Heart left ventricle (tissue), 16 donors: ENCODE measurements at regions of chr3 and their contacts with region 1.

Region 1: DNA sequence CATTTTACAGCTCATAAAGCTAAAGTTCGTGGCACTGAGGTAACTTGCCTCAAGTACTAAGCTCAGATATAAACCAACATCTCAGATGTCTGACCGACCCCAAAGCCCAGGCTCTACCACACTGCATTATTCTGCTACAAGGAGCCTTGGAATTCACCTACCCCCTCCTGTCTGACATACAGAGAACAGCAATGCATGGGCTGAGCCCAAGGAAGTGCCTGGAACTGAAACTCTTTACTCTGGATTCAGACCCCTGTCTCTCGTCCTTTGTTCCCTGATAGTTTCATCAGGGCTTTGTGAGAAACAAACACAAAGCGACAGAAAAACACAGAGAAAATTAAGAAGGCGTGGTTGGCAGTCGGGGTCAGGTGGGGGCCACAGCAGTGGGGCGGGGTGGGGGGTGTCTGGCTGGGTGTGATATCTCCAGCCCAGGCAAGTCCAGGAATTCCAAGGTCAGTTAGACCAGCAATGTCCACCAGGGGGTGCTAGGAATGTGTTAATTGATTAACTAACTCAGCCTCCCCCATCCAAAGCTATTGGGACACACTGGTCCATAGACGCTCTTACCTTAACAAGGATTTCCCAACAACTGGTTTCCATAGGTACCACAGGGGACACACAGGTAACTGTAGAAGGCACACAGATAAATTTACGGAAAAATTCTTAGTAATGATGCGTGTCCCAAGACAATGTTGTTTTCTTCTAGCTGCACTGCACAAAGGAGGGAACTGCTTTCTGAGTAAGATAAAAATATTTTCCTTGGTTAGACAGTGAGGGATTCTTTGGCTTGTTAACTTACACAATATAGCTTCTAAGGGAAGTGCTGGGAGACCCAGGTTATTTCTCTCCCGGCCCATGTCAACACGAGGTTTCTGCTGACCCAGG is 18.8 kb upstream of the SSUH2 start:
- DNase-seq: peak in 4 of 5 donors; percentile 50 to 64 (median 60)
- ATAC-seq: peak in 2 of 4 donors; percentile 18 to 36
- H3K4me3 ChIP-seq: no peak overlapping the region
- H3K27ac ChIP-seq: no peak overlapping the region
- H3K4me1 ChIP-seq: peaks cover 0 to 37% (median 19%) of the 10 kb centered on the region in 12 donors
- H3K27me3 ChIP-seq: no peaks in the 10 kb centered on the region
- CTCF ChIP-seq: peak; percentile 43 to 78 (median 64)
- POLR2A ChIP-seq: no peak

Region 2: GRCh38 chr3:8733332-8734094 is 70.1 kb after region 1 on chr3 and contains the start of gene CAV3:
- intact Hi-C with region 1: loop called in 2 of 10 experiments (anchors 5 to 10 kb)
- DNase-seq: peak in 4 of 5 donors; percentile 58 to 81 (median 70)
- ATAC-seq: peak; percentile 79 to 90 (median 84)
- H3K4me3 ChIP-seq: peak within 1 kb of the TSS; percentile 4 to 61 (median 51)
- H3K27ac ChIP-seq: peak within 1 kb of the TSS; percentile 16 to 96 (median 80)
- H3K4me1 ChIP-seq: peaks cover 0 to 15% (median 0%) of the 10 kb centered on the region in 12 donors
- H3K27me3 ChIP-seq: no peaks in the 10 kb centered on the region
- CTCF ChIP-seq: no peak
- POLR2A ChIP-seq: no peak
- total RNA-seq, gene CAV3: 17.4 to 37.8 (median 28.3) TPM

Region 3: GRCh38 chr3:8741581-8742261 is 78.3 kb after region 1 on chr3:
- intact Hi-C with region 1: loop called in 2 of 10 experiments (anchors 5 to 10 kb)
- DNase-seq: peak in 4 of 5 donors; percentile 39 to 53 (median 48)
- ATAC-seq: peak; percentile 73 to 86 (median 84)
- H3K4me3 ChIP-seq: peak overlapping the region in 2 of 12 donors; percentile 15 to 28
- H3K27ac ChIP-seq: peak overlapping the region in 7 of 12 donors; percentile 21 to 74 (median 42)
- H3K4me1 ChIP-seq: peaks cover 0 to 23% (median 15%) of the 10 kb centered on the region in 12 donors
- H3K27me3 ChIP-seq: no peaks in the 10 kb centered on the region
- CTCF ChIP-seq: no peak
- POLR2A ChIP-seq: no peak

Region 4: DNA sequence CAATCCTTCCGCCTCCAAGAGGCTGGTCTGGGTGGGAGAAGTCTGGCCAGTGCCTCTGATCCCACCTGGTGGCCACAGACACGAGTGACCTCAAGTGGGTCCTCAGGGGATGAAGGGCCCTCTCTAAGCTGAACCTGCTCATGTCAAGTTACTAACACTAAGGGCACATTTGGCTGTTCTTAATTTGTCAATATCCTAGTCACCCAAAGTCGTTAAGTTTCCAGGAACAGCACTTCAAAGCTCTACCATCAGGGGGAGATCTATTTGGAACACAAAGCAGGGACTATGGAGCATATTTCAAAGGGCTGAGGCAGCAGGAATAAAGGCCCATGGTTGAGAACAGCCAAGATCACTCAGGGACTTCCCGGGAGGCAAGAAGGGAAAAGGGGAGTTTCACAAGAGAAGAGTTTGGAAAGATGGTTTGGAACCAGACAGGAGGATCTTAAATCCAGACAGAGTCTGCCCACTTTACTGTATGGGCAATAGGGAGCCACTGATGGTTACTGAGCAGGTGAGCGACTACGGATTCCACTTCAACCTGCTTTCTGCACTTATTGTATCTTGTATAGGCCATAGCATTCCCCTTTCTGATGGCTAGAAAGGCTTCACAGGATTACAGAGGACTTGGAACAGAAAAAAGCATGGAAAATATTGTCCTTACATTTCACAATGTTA is 92.3 kb after region 1 on chr3:
- intact Hi-C with region 1: loop called in 3 of 10 experiments (anchors 10 kb)
- DNase-seq: no peak
- ATAC-seq: no peak
- H3K4me3 ChIP-seq: no peak overlapping the region
- H3K27ac ChIP-seq: no peak overlapping the region
- H3K4me1 ChIP-seq: no peaks in the 10 kb centered on the region
- H3K27me3 ChIP-seq: no peaks in the 10 kb centered on the region
- CTCF ChIP-seq: peak in 2 of 12 donors; percentile 8 to 13
- POLR2A ChIP-seq: no peak

Region 5: DNA sequence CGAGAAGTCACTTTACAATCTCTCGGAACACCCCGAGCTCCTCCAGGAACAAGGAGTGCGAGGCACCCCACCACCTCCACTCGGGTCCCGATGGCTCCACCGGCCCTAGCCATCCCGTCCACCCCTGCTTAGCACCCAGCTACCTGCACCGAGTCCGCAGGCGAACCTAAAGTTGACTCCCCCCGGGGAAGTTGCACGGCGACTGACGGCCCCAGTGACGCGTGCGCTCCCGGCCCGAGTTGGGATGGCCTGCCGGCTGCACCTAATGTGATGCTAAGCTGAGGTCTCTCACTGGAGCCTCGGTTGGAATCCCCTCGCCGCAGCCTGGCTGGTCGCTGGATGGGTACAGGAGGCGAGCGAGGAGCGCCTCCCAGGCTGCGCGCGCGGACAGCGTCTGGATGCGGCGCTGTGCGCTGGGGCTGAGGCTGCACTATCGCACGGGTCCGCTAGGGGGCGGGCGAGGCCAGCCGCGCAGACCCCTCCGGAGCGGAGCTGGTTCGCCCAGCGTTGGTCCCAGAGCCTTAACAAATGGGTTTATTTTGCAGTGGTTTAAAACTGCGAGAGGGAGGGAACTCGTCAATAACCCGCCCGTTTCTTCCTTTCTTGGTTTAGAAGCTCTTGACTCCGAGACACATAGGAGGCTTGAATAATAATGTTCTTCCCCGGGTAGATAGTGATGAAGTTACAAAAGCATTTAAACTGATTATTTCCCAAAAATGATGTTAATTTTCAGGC is 105.8 kb after region 1 on chr3 and contains the start of gene OXTR:
- intact Hi-C with region 1: loop called in 8 of 10 experiments (anchors 2 to 10 kb)
- DNase-seq: peak; percentile 45 to 84 (median 56)
- ATAC-seq: peak; percentile 72 to 96 (median 94)
- H3K4me3 ChIP-seq: peak within 1 kb of the TSS in 10 of 12 donors; percentile 1 to 50 (median 42)
- H3K27ac ChIP-seq: no peak within 1 kb of the TSS
- H3K4me1 ChIP-seq: peaks cover 0 to 27% (median 9%) of the 10 kb centered on the region in 12 donors
- H3K27me3 ChIP-seq: peaks cover 17 to 44% (median 24%) of the 10 kb centered on the region in 9 donors
- CTCF ChIP-seq: peak; percentile 96 to 100 (median 99)
- POLR2A ChIP-seq: no peak
- total RNA-seq, gene OXTR: 0.12 to 0.54 (median 0.27) TPM in 6 of 9 donors, not detected in the others

Region 6: DNA sequence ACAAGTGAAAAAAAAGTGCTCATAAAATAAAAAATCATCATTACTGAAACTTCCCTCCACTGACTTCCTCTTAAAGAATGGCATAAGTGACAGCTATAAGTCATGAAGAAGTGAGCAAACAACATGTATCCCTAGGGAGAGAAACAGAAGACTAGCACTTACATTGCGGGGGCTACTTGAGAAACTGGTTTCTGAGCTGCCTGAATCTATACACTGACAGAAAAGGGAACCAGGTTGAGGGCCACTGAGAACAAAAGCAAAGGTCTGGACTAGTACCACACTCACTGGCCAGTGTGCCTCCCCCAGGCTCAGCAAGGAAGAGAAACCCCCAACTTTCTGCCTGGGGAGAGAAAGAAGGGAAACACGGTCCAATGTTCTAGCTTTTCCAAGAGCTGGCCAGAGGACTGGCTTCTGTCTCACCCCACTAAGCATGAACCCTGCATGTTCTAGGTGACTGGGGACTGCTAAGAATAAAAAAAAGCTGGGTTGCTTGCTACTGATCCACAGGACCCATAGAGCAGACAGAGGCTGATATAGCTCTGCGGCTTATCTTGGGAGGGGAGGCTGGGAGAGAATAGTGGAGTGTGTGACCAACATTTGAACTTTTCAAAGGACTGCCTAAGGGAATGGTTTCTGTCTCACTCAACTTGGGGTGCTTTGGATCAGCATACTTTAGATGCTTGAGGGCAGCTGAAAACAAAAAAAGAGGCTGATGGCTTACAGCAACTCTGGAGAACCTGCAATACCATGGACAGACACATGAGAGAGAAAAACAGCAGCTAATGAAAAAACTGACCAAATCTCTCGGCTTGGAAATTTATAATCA is 291.7 kb after region 1 on chr3:
- intact Hi-C with region 1: loop called in 1 of 10 experiments (anchors 10 kb)
- DNase-seq: no peak
- ATAC-seq: peak; percentile 48 to 81 (median 69)
- H3K4me3 ChIP-seq: no peak overlapping the region
- H3K27ac ChIP-seq: peak overlapping the region in 3 of 12 donors; percentile 24 to 33 (median 31)
- H3K4me1 ChIP-seq: peaks cover 0 to 6% (median 0%) of the 10 kb centered on the region in 12 donors
- H3K27me3 ChIP-seq: no peaks in the 10 kb centered on the region
- CTCF ChIP-seq: peak in 1 of 12 donors; percentile 10
- POLR2A ChIP-seq: no peak